ENCODE measurements at regions of chr12 and their contacts with region 1.

Region 1: GRCh38 chr12:114662512-114663177 is 21.3 kb downstream of the TBX3 start:
- DNase-seq: no peak

Region 2: DNA sequence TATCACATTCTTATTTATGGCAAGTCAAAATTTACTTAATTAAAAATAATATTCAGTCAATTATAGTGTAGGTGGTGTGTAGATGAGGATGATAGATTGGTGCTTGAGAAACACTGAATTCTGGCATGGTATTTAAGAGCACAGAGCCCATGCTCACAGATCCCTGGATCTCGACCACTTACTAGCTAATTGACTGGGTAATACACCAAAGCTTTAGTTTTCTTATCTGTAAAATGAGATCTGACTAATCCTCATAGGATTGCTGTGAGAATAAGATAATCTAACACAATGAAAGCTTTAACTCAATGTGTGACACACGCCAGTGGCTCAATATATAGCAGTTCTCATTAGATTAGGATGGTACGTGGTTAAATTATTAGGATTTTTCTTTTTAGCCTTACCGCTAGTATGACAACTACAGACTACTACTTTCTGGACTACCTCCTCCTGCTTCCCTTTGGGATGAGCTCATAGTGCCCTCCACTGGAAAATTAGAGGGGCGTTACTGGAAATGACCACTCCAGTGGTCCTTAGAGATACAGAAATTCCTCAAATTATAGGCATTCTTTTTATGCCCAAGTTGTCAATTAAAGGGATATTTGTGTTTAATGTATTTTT is 504.2 kb after region 1 on chr12:
- intact Hi-C with region 1: loop called (anchors 10 kb)
- DNase-seq: no peak

Region 3: GRCh38 chr12:115916910-115917668 is 1254.4 kb after region 1 on chr12:
- intact Hi-C with region 1: loop called (anchors 1 kb)
- DNase-seq: peak; percentile 85

Measured in cardiac septum (tissue), 1 donor.